GM10248 (cell line): ENCODE measurements at regions of chr4 and their contacts with region 1.

Region 1: DNA sequence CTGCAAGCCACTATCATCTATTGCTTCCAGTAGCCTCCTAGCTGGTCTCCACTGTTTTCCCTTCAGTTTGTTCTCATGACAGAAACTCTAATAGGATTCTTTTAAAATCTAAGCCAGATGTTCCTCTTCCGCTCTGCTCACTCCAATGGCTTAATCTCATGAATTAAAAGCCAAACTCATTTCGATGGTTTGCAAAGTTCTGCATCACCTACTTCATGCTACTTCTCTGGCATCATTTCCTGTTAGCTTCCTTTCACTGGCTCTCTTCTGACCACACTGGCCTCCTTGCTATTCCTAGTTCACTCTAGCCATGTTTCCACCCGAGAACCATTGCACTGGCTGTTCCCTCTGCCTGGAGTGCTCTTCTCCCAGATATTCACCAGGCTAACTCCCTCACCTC is 102.0 kb upstream of the LSM6 start:
- DNase-seq: no peak
- CTCF ChIP-seq: no peak

Region 2: DNA sequence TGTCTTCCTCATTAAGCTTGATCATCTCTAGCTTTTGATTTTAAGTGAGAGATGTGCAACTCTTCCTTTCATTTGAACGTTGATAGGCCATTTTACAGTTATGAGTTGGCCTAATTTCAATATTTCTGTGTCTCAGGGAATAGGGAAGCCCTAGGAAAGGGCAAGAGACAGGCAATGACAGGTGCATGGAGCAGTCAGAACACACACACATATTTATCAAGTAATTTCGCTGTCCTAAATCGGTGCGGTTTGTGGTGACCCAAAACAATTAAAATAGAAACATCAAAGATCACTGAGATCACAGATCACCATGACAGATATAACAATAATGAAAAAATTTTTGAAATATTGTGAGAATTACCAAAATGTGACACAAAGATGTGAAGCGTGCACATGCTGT is 14.3 kb after region 1 on chr4:
- CTCF ChIA-PET with region 1: interaction called, 10 read pairs
- POLR2A ChIA-PET with region 1: no interaction called
- DNase-seq: no peak
- CTCF ChIP-seq: no peak